ENCODE measurements at regions of chr15 and their contacts with region 1.

Region 1: DNA sequence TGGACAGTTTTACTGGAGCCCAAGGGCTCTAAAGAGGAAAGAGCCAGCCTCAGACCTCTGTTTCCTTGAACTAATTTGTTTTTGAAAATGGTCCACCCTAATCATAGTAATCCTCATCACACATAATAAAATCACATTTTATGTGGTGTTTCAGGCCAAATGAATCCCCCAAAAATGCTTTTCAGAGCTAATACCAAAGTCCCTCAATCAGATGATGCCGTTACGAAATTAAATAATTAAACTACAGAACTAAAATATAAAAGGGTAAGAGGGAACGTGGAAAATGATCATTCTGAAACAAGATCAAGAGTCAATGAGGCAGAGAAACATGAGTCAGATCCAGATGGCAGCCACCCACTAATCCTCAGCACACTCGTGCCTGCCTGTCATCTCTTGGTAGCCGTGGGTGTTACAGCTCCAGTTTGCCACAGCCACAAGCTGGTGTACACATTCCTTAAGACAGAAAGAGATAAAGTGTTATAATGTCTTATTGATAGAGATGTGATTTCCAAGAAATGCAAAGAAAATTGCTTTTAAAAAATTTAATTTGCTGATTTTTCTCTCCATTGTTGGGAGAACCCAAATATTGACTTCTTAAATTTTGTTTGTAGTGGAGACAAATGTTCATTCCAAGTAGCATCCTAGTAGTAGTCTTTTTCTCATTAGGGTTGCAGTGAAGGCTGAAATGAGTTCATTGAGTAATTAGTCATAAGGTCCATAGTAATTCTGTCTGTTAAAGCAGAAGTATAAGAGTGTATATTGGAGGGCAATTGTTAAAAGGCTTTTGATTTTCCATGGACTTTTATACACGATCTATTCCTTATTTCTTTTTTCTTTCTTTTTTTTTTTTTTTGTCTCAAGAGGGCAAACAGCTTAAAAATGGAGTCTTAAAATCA is 104.2 kb downstream of the AGBL1 start:
- DNase-seq: peak; percentile 78 to 86
- ATAC-seq: peak; percentile 99 to 100
- H3K4me3 ChIP-seq: peak overlapping the region in 2 of 4 donors; percentile 10 to 12
- H3K27ac ChIP-seq: peak overlapping the region; percentile 71 to 88 (median 81)
- H3K4me1 ChIP-seq: peaks cover 14 to 26% of the 10 kb centered on the region in 2 donors
- H3K27me3 ChIP-seq: no peaks in the 10 kb centered on the region
- CTCF ChIP-seq: no peak
- POLR2A ChIP-seq: peak in 1 of 2 donors; percentile 12

Region 2: GRCh38 chr15:86079508-86080266 is 104.2 kb before region 1 on chr15 and contains the start of gene AGBL1:
- in situ Hi-C with region 1: no loop called
- intact Hi-C with region 1: loop called (anchors 5 kb)
- DNase-seq: peak; percentile 87 to 98
- ATAC-seq: peak; percentile 78 to 83
- H3K4me3 ChIP-seq: peak within 1 kb of the TSS; percentile 19 to 44 (median 31)
- H3K27ac ChIP-seq: peak within 1 kb of the TSS; percentile 89 to 92 (median 90)
- H3K4me1 ChIP-seq: peaks cover 81 to 85% of the 10 kb centered on the region in 2 donors
- H3K27me3 ChIP-seq: no peaks in the 10 kb centered on the region
- CTCF ChIP-seq: peak in 3 of 5 experiments; percentile 21 to 27 (median 24)
- POLR2A ChIP-seq: peak; percentile 42 to 85
- total RNA-seq, gene AGBL1: 3.8 to 29.7 (median 15.9) TPM

Region 3: DNA sequence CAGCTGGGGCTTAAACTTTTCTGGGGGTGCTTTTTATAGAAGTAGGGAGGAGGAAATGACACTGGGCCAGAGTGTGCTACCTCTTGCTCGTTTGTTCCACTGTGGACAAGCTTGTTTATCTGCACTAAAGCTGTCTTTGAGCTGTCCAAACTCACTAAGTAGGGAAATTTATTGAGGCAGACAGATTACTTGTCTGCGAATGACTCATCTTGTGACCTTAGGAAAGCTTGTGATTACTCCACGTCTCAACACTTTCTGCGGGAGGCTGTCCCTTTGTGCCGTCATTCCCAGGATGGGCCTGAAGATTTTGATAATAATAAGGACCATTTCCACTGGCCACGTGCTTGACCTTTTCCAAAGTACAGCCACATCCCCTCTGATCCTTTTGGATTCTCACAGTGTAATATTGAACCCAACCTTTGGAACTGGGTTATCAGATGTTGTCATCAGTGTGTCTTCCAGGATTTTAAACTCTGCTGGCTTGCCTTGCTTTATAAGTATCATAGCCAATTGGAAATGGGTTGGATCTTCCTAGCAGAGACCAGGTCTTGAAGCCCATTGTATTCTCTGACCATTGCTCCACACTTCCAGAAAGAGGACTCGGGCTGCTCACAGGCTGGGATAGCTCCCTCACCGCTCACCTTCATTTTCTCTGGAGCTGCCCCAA is 19.5 kb before region 1 on chr15:
- in situ Hi-C with region 1: no loop called
- intact Hi-C with region 1: loop called (anchors 2 kb)
- DNase-seq: peak; percentile 75 to 76
- ATAC-seq: peak; percentile 72 to 81
- H3K4me3 ChIP-seq: no peak overlapping the region
- H3K27ac ChIP-seq: peak overlapping the region; percentile 85 to 98 (median 98)
- H3K4me1 ChIP-seq: peaks cover 63 to 67% of the 10 kb centered on the region in 2 donors
- H3K27me3 ChIP-seq: no peaks in the 10 kb centered on the region
- CTCF ChIP-seq: no peak
- POLR2A ChIP-seq: peak; percentile 56 to 78

Region 4: DNA sequence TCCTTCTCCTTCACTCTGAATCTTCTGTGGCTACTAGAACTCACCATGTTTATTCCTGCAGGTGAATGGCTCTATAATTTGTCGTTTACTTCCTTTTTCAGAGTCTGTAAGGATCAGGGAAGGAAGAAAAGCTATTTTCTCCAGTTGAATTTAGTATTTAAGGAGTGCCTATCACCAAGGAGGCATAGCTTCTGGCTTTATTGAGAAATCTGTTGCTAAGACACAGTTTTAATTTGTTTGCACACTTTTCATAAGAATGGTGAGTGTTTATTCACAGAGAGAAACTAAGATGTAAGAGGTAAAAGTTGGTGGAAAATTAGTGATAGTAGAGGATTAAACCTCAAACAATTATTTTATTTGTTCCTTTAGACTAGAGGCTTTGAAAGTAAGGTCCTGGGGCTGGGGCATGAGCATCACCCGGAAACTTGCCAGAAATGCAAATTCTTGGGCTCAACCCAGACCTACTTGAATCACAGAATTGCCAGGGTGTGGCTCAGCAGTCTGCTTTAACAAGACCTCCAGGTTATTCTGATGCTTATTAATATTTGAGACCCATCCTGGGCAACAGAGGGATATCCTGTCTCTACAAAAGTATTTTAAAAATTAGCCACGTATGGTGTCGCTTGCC is 357.1 kb after region 1 on chr15:
- in situ Hi-C with region 1: no loop called
- intact Hi-C with region 1: no loop called
- DNase-seq: no peak
- ATAC-seq: peak in 1 of 2 donors; percentile 27
- H3K4me3 ChIP-seq: no peak overlapping the region
- H3K27ac ChIP-seq: no peak overlapping the region
- H3K4me1 ChIP-seq: peaks cover 0 to 5% of the 10 kb centered on the region in 2 donors
- H3K27me3 ChIP-seq: no peaks in the 10 kb centered on the region
- CTCF ChIP-seq: no peak
- POLR2A ChIP-seq: no peak